ENCODE measurements at regions of chr3 and their contacts with region 1.

Region 1: GRCh38 chr3:190197346-190197763 is 76.7 kb upstream of the P3H2 start:
- DNase-seq: no peak
- H3K4me3 ChIP-seq: no peak overlapping the region
- H3K27ac ChIP-seq: no peak overlapping the region
- H3K4me1 ChIP-seq: no peaks in the 10 kb centered on the region
- H3K27me3 ChIP-seq: no peaks in the 10 kb centered on the region
- CTCF ChIP-seq: no peak

Region 2: DNA sequence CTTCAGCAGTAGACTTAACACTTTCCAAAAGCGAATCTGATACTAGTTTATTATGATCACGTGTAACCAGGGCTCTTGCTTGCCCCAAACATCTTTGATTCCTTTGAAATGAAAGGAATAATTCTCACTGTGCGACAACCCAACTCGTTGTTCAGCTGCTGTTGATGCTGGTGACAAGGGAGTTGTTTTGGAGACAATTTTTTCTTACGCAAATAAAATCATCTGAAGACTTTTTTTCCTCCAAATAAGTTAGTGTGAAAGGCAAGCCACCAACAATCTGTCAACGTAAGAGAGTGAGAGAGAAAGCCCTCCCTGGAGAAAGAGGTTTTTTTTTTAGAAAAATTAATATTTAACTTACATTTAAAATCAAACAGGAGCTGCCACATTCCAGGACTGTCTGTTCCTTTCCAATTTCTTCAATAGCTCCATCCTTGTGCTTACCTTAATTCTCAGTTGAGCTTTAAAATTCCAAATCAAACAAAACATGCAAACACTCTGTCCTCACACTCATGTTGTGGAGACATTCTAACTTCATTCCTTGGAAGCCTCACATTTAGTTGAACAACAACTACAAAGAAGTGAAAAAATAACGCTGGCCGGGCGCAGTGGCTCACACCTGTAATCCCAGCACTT is 71.8 kb before region 1 on chr3:
- intact Hi-C with region 1: loop called (anchors 5 kb)
- DNase-seq: no peak
- H3K4me3 ChIP-seq: no peak overlapping the region
- H3K27ac ChIP-seq: no peak overlapping the region
- H3K4me1 ChIP-seq: peaks cover 0 to 16% (median 10%) of the 10 kb centered on the region in 4 donors
- H3K27me3 ChIP-seq: no peaks in the 10 kb centered on the region
- CTCF ChIP-seq: no peak

Region 3: DNA sequence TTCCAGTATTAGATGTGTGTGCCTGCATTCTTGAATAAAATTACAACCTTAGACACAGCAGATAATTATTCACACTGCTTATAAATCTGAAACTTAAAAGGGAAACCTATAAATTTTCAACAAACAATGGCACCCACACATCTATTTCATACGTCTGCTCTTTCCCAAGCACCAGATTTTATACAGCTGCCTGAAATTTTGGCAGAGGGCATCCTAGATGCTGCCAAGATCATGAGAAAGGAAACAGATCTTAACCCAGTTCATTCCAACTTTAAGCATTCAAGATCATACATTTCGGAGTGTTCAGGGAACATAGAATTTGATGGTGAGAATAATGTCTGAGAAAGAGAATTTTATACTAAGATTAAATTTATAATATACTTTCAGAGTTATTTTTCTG is 71.7 kb after region 1 on chr3:
- intact Hi-C with region 1: no loop called
- DNase-seq: no peak
- H3K4me3 ChIP-seq: no peak overlapping the region
- H3K27ac ChIP-seq: no peak overlapping the region
- H3K4me1 ChIP-seq: peaks cover 0 to 8% (median 2%) of the 10 kb centered on the region in 4 donors
- H3K27me3 ChIP-seq: no peaks in the 10 kb centered on the region
- CTCF ChIP-seq: no peak